Gastrocnemius medialis (tissue), 4 donors: ENCODE measurements at regions of chr3 and their contacts with region 1.

Region 1: GRCh38 chr3:8536096-8537056 is 34.8 kb downstream of the LMCD1 start:
- DNase-seq: no peak
- ATAC-seq: peak in 1 of 2 donors; percentile 22
- H3K4me3 ChIP-seq: no peak overlapping the region
- H3K27ac ChIP-seq: peak overlapping the region; percentile 19 to 95 (median 72)
- H3K4me1 ChIP-seq: peaks cover 51 to 67% of the 10 kb centered on the region in 2 donors
- H3K27me3 ChIP-seq: no peaks in the 10 kb centered on the region
- CTCF ChIP-seq: no peak
- POLR2A ChIP-seq: no peak

Region 2: DNA sequence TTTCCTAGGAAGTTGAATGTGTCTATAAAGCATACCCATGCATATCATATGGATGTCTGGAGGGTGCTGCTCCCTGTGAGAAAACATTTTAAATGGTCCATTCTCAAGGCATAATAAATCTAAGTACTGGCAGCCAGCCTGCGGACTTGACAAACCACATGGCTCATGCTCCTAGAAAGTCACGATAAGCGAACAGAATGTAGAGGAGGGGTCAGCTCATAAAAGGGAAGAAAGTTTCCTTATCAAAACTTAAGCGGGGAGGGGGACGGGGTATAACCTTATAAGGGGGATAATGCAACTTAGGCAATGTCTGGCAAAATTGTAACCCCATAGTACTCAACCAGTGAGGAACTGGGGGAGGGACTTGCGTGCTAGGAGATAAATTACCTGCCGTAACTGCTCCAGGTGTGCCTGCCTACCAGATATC is 194.5 kb before region 1 on chr3:
- in situ Hi-C with region 1: no loop called
- intact Hi-C with region 1: no loop called
- DNase-seq: no peak
- ATAC-seq: no peak
- H3K4me3 ChIP-seq: no peak overlapping the region
- H3K27ac ChIP-seq: no peak overlapping the region
- H3K4me1 ChIP-seq: no peaks in the 10 kb centered on the region
- H3K27me3 ChIP-seq: no peaks in the 10 kb centered on the region
- CTCF ChIP-seq: no peak
- POLR2A ChIP-seq: no peak

Region 3: GRCh38 chr3:8523041-8523440 is 13.3 kb before region 1 on chr3:
- in situ Hi-C with region 1: no loop called
- intact Hi-C with region 1: loop called (anchors 2 kb)
- DNase-seq: no peak
- ATAC-seq: no peak
- H3K4me3 ChIP-seq: no peak overlapping the region
- H3K27ac ChIP-seq: peak overlapping the region; percentile 89 to 97 (median 94)
- H3K4me1 ChIP-seq: peaks cover 97% of the 10 kb centered on the region in 2 donors
- H3K27me3 ChIP-seq: no peaks in the 10 kb centered on the region
- CTCF ChIP-seq: no peak
- POLR2A ChIP-seq: no peak